Body of pancreas (tissue), 4 donors: ENCODE measurements at regions of chr17 and their contacts with region 1.

Region 1: DNA sequence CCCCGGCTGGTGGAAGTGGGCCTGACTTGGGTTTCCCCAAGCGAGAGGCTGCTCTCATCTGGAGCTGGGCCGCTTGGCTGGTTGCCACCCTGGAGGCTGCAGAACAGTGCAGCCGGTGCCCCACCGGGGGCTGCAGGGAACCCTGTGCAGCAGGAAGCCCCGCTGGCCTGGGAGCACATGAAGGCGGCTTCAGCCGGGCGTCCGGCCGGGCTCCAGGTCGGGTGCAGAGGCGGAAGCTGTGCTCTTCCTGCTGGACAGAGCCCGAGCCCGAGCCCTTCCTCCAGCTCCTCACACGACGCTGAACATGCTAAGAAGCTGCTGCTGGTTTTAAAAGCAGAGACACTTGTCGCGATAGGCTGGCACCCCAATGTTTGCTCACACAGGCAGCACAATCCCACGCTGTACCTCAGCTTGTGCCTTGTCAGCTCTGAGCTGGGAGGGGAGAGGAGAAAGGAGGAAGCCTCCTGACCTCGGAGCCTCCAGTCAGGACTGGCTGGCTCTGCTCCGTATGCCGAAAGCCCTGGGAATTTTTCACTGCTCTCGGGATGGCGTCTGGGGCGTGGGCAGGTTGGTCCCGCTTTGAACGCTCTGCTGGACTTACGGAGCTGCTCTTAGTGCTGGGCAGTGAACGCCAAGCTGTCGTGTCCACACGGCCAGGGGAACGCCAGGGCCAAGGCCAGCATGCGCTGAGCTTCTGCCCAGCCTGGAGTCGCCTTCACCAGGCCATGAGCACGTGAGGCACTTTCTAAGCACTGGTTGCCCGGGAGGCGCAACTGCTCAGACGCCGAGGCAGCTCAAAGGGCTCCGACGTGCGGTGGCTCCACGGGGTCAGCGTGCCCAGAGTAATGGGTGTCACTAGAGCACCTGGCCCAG is 8.8 kb downstream of the CDK5R1 start:
- DNase-seq: peak in 2 of 4 donors; percentile 31 to 41
- ATAC-seq: peak; percentile 29
- H3K4me3 ChIP-seq: no peak overlapping the region
- H3K27ac ChIP-seq: no peak overlapping the region
- H3K4me1 ChIP-seq: peaks cover 5% of the 10 kb centered on the region
- H3K27me3 ChIP-seq: no peaks in the 10 kb centered on the region
- CTCF ChIP-seq: no peak
- POLR2A ChIP-seq: no peak

Region 2: GRCh38 chr17:32006957-32007462 is 488.6 kb before region 1 on chr17 and contains the start of gene LRRC37B:
- intact Hi-C with region 1: no loop called
- DNase-seq: peak; percentile 81 to 89 (median 85)
- ATAC-seq: peak; percentile 96
- H3K4me3 ChIP-seq: peak within 1 kb of the TSS; percentile 56 to 87
- H3K27ac ChIP-seq: peak within 1 kb of the TSS; percentile 32 to 85 (median 78)
- H3K4me1 ChIP-seq: peaks cover 24% of the 10 kb centered on the region
- H3K27me3 ChIP-seq: no peaks in the 10 kb centered on the region
- CTCF ChIP-seq: peak; percentile 83 to 99 (median 97)
- POLR2A ChIP-seq: peak in 2 of 3 donors; percentile 28 to 40
- total RNA-seq, gene LRRC37B: 11.4 to 23.4 TPM

Region 3: DNA sequence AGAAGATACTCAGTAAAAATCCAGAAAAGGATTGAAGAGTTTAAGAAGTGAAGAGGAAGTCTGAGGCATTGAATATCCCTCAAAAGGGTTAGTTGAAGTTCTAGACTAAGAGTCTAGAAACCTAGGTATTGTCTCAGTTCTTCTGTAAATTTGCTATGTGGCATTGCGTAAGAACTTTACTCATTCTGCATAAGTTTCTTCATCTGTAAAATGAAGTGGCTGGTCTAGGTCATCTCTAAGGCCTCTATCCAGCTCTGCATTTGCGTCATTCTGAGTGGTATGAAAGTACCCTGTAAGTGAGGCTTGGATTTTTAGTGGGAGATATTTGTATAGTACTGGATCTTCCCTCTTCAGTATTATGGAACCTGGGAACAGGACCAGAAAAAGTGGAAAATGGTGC is 251.1 kb after region 1 on chr17:
- intact Hi-C with region 1: loop called (anchors 10 kb)
- DNase-seq: no peak
- ATAC-seq: no peak
- H3K4me3 ChIP-seq: no peak overlapping the region
- H3K27ac ChIP-seq: no peak overlapping the region
- H3K4me1 ChIP-seq: peaks cover 4% of the 10 kb centered on the region
- H3K27me3 ChIP-seq: no peaks in the 10 kb centered on the region
- CTCF ChIP-seq: no peak
- POLR2A ChIP-seq: no peak